Activated T-helper 2 cell treated with anti-CD3 and anti-CD28 coated beads, Interferon-gamma antibody, Interleukin-2, Interleukin-4, amounts not matched to agents 10 μg/mL and 5 μg/mL and 100 μg/mL, durations not matched to agents 14 hours and 24 hours and 36 hours (primary cell): ENCODE measurements at regions of chr1 and their contacts with region 1.

Region 1: DNA sequence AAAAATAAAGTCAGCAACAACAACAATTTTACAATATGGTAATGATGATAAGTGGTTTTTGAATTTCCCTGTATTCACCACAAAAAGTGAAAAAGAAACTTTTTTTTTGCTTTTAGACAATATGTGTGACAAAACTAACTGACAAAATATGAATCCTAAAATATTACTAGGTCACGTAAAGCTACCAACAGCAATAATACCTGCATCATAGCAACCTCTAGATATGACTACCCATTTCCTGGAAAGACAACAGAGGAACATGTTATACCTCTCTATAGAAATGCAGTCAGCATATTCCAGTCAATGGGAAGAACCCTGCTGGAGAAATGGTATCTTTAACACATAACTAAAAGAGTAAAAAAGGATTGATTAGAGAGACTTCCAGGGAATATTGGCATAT is 73.7 kb downstream of the PDE4B start:
- DNase-seq: no peak
- H3K4me3 Mint-ChIP-seq: no peak overlapping the region
- H3K27ac Mint-ChIP-seq: no peak overlapping the region
- H3K4me1 Mint-ChIP-seq: peaks cover 11% of the 10 kb centered on the region
- H3K27me3 Mint-ChIP-seq: peaks cover 7% of the 10 kb centered on the region

Region 2: GRCh38 chr1:65830306-65830705 is 36.1 kb before region 1 on chr1:
- intact Hi-C with region 1: loop called (anchors 1 kb)
- DNase-seq: peak; percentile 12
- H3K4me3 Mint-ChIP-seq: no peak overlapping the region
- H3K27ac Mint-ChIP-seq: no peak overlapping the region
- H3K4me1 Mint-ChIP-seq: peaks cover 23% of the 10 kb centered on the region
- H3K27me3 Mint-ChIP-seq: peaks cover 42% of the 10 kb centered on the region